ENCODE measurements at regions of chr2 and their contacts with region 1.

Region 1: GRCh38 chr2:10434886-10435819 is 13.0 kb downstream of the ODC1 start:
- DNase-seq: peak in 1 of 2 donors; percentile 94
- H3K4me3 ChIP-seq: no peak overlapping the region
- CTCF ChIP-seq: peak in 2 of 3 donors; percentile 73 to 83
- POLR2A ChIP-seq: no peak

Region 2: GRCh38 chr2:10072656-10073480 is 362.3 kb before region 1 on chr2:
- intact Hi-C with region 1: loop called (anchors 5 kb)
- DNase-seq: peak; percentile 77 to 94
- H3K4me3 ChIP-seq: no peak overlapping the region
- CTCF ChIP-seq: no peak
- POLR2A ChIP-seq: no peak

Region 3: GRCh38 chr2:10659898-10660568 is 224.9 kb after region 1 on chr2:
- intact Hi-C with region 1: loop called (anchors 10 kb)
- DNase-seq: no peak
- H3K4me3 ChIP-seq: no peak overlapping the region
- CTCF ChIP-seq: no peak
- POLR2A ChIP-seq: no peak

Region 4: DNA sequence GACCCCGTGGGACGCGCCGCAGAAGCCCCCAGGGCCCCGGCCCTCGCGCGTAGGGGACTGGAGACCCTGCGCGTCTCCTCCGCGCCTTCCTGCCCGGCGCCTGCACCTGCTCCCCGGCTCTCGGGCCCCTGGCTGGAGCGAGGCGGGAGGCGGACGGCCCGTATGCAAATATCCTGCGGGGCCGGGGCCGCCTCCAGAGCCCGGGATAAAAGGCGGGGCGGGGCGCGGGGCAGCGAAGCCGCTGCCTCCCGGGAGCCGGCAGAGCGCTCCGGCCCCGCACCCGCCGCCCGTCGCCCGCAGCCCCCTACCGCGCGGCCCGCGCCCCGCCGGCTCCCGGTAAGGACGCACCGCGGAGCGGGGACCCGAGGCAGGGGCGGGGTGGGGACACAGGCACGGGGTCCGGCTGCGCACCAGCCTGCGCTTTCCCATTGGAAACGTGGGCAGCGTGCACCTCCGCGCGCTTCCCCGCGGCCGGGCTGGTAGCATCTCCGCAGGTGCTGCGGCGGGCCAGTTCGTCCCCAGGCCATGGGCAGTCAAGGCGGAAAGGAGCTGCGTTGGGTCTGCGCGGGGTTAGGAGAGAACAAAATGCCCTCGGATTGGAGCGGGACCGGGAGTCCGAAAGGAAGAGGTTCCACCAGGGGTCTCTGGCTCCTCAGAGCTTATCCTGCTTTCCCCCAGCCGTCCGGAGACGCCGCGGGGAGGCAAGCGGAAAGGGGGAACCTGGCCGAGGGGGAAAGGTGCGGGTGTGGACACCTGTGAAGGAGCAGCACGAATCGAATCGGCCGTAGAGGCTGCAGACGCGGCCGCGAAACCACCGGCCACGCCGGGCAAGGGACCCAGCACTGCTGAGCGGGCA is 286.5 kb after region 1 on chr2 and contains the start of gene ATP6V1C2:
- intact Hi-C with region 1: no loop called
- DNase-seq: no peak
- H3K4me3 ChIP-seq: no peak within 1 kb of the TSS
- CTCF ChIP-seq: no peak
- POLR2A ChIP-seq: no peak
- total RNA-seq, gene ATP6V1C2: 130 to 418 (median 211) TPM

Measured in lower leg skin (tissue), 4 donors.